K562 (cell line): ENCODE measurements at regions of chr10 and their contacts with region 1.

Region 1: GRCh38 chr10:75099952-75100763 is 11.3 kb upstream of the SAMD8 start:
- DNase-seq: peak; percentile 85 to 93 (median 92)
- ATAC-seq: peak; percentile 96
- H3K4me3 ChIP-seq: no peak overlapping the region
- H3K27ac ChIP-seq: no peak overlapping the region
- H3K4me1 ChIP-seq: peaks cover 16 to 38% of the 10 kb centered on the region in 2 experiments; a peak in 4 of 5 replicates
- H3K27me3 ChIP-seq: no peaks in the 10 kb centered on the region
- CTCF ChIP-seq: peak; percentile 96 to 99 (median 97)
- EP300 ChIP-seq: no peak
- POLR2A ChIP-seq: no peak
- RAD21 ChIP-seq: peak; percentile 96 to 97

Region 2: DNA sequence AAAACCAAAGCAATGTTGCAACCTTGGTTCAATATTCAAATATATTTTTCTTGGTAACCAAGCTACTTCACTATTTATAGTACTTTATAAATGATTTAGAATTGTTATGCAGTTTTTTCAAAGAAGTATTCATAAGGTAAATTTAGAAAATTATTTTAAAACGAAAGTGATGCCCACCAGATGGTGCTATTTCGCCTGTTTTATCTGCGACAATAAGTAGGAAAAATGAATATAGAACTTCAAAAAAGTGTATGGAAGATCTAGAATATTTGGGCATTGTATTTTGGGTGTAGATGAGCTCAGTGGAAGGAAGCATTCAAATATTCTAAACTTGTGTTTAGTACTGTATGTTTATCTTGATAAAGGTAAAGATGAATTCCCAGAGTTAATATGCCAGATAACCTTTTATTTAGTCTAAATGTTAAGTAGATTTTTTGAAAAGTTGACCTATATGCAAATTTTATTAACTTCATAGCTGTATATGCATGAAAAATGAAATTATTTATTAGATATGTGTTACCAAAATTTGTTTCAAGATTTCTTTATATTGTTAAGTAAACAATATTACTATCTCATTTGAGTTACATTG is 856.0 kb before region 1 on chr10:
- CTCF ChIA-PET with region 1: interaction called, 28 read pairs
- POLR2A ChIA-PET with region 1: no interaction called
- in situ Hi-C with region 1: loop called (anchors 5 kb)
- intact Hi-C with region 1: loop called (anchors 5 kb)
- DNase-seq: peak in 1 of 4 experiments; percentile 69
- ATAC-seq: no peak
- H3K4me3 ChIP-seq: no peak overlapping the region
- H3K27ac ChIP-seq: no peak overlapping the region
- H3K4me1 ChIP-seq: peaks cover 9 to 14% of the 10 kb centered on the region in 2 experiments; a peak in 4 of 5 replicates
- H3K27me3 ChIP-seq: no peaks in the 10 kb centered on the region
- CTCF ChIP-seq: peak in 2 of 3 experiments; percentile 43 to 73; a peak in 4 of 6 replicates
- EP300 ChIP-seq: no peak
- POLR2A ChIP-seq: no peak
- RAD21 ChIP-seq: peak; percentile 72 to 75

Region 3: DNA sequence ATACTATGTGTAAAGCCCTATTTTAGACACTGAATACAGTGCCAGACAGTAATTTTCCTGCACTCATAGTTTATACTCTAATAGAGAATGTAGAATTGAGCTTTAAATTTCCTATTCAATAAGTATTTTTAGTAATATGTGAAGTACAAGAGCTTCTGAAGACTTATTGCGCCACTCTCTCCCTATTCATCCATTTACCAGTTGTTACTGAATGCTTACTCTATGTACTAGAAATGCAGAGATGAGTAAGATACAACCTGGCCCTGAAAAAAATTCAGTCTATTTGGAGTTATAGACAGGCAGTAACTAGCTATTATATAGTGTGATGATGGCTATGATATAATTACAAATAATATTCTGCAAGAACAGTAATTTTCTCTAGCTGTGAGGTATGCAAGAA is 850.3 kb before region 1 on chr10:
- CTCF ChIA-PET with region 1: interaction called, 28 read pairs
- POLR2A ChIA-PET with region 1: no interaction called
- in situ Hi-C with region 1: loop called (anchors 5 kb)
- intact Hi-C with region 1: no loop called
- DNase-seq: no peak
- ATAC-seq: no peak
- H3K4me3 ChIP-seq: no peak overlapping the region
- H3K27ac ChIP-seq: no peak overlapping the region
- H3K4me1 ChIP-seq: peaks cover 0 to 4% of the 10 kb centered on the region in 2 experiments; a peak in 1 of 5 replicates
- H3K27me3 ChIP-seq: no peaks in the 10 kb centered on the region
- CTCF ChIP-seq: no peak
- EP300 ChIP-seq: no peak
- POLR2A ChIP-seq: no peak
- RAD21 ChIP-seq: no peak

Region 4: GRCh38 chr10:74262856-74263255 is 837.3 kb before region 1 on chr10:
- CTCF ChIA-PET with region 1: interaction called, 23 read pairs
- POLR2A ChIA-PET with region 1: no interaction called
- in situ Hi-C with region 1: no loop called
- intact Hi-C with region 1: loop called (anchors 1 kb)
- DNase-seq: no peak
- ATAC-seq: no peak
- H3K4me3 ChIP-seq: no peak overlapping the region
- H3K27ac ChIP-seq: no peak overlapping the region
- H3K4me1 ChIP-seq: no peaks in the 10 kb centered on the region
- H3K27me3 ChIP-seq: no peaks in the 10 kb centered on the region
- CTCF ChIP-seq: no peak
- EP300 ChIP-seq: no peak
- POLR2A ChIP-seq: no peak
- RAD21 ChIP-seq: no peak

Region 5: DNA sequence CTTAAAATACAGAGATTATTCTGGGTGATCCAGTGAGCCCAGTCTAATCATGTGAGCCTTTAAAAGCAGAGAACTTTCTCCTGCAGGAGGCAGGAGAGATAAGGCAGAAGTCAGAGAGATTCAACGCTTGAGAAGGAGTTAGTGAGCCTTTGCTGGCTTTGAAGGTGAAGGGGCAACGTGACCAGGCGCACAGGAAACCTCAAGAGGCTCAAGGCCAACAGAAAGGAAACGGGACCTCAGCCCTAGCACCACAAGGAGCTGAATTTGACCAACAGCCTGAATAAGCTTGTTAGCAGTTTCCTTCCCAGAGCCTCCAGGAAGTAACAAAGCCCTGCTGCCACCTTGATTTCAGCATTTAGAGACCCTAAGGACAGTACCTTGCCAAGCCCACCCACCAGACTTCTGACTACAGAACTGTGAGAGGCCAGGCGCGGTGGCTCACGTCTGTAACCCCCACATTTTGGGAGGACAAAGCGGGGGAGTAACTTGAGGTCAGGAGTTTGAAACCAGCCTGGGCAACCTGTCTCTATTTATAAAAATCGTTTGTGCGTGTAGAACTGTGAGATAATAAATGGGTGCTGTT is 361.1 kb before region 1 on chr10:
- CTCF ChIA-PET with region 1: no interaction called
- POLR2A ChIA-PET with region 1: no interaction called
- in situ Hi-C with region 1: loop called (anchors 10 kb)
- intact Hi-C with region 1: loop called (anchors 10 kb)
- DNase-seq: peak in 2 of 4 experiments; percentile 55 to 74
- ATAC-seq: peak; percentile 91
- H3K4me3 ChIP-seq: no peak overlapping the region
- H3K27ac ChIP-seq: no peak overlapping the region
- H3K4me1 ChIP-seq: peaks cover 3 to 7% of the 10 kb centered on the region in 2 experiments; a peak in 3 of 5 replicates
- H3K27me3 ChIP-seq: no peaks in the 10 kb centered on the region
- CTCF ChIP-seq: peak; percentile 56 to 79 (median 63)
- EP300 ChIP-seq: no peak
- POLR2A ChIP-seq: no peak
- RAD21 ChIP-seq: peak; percentile 81 to 88

Region 6: DNA sequence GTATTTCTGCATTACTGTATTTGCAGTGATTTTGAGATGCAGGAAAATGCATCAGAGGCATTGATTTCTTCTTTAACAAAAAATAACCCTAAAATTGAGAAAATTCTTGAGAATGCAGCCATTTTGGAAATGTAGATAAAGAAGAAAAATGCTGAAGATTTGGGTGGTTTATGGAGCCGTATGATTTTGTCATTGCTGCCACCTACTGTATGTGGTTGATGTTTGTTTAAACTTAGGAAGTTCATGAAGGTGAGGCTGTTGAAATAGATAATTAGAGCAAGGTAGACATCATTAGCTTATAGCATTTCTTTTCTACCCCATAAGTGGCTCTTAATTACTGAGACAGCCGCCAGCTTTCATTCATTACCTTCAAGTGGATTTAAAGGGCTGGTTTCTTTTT is 80.8 kb before region 1 on chr10:
- CTCF ChIA-PET with region 1: no interaction called
- POLR2A ChIA-PET with region 1: interaction called, 3 read pairs
- in situ Hi-C with region 1: no loop called
- intact Hi-C with region 1: loop called (anchors 1 kb)
- DNase-seq: peak in 2 of 4 experiments; percentile 40 to 44
- ATAC-seq: peak; percentile 62
- H3K4me3 ChIP-seq: no peak overlapping the region
- H3K27ac ChIP-seq: no peak overlapping the region
- H3K4me1 ChIP-seq: no peaks in the 10 kb centered on the region
- H3K27me3 ChIP-seq: no peaks in the 10 kb centered on the region
- CTCF ChIP-seq: peak; percentile 40 to 67 (median 42); a peak in 5 of 6 replicates
- EP300 ChIP-seq: no peak
- POLR2A ChIP-seq: no peak
- RAD21 ChIP-seq: peak; percentile 83 to 85

Region 7: GRCh38 chr10:75129537-75129936 is 29.4 kb after region 1 on chr10:
- CTCF ChIA-PET with region 1: no interaction called
- POLR2A ChIA-PET with region 1: no interaction called
- in situ Hi-C with region 1: no loop called
- intact Hi-C with region 1: no loop called
- DNase-seq: no peak
- ATAC-seq: no peak
- H3K4me3 ChIP-seq: no peak overlapping the region
- H3K27ac ChIP-seq: no peak overlapping the region
- H3K4me1 ChIP-seq: no peaks in the 10 kb centered on the region; a peak in 1 of 5 replicates
- H3K27me3 ChIP-seq: no peaks in the 10 kb centered on the region
- CTCF ChIP-seq: no peak
- EP300 ChIP-seq: no peak
- POLR2A ChIP-seq: no peak
- RAD21 ChIP-seq: no peak